ENCODE measurements at regions of chr16 and their contacts with region 1.

Region 1: GRCh38 chr16:53054670-53055485 is at the start of gene CHD9:
- DNase-seq: peak; percentile 72
- H3K4me3 Mint-ChIP-seq: peak within 1 kb of the TSS; percentile 80
- H3K27ac Mint-ChIP-seq: no peak within 1 kb of the TSS
- H3K4me1 Mint-ChIP-seq: peaks cover 18% of the 10 kb centered on the region
- H3K27me3 Mint-ChIP-seq: peaks cover 3% of the 10 kb centered on the region
- total RNA-seq, gene CHD9: 9.4 to 9.7 TPM

Region 2: DNA sequence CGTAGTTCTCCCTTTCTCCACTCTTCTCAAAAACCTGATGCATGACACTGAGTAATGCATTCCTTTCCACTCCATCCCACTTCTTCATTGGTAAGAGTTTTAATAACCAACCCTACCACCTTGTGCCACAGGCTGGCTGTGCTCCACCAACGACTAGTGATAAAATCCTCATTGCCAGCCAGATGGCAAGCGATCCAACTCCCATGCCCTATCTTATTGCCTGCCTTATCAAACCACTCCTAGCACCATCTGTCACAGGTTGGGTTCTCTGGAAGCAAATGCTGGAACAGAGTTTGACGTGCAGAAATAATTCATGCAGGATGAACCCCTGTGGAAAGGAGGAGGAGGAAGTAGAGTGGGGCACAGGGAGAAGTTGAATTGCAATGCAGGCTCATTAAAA is 101.7 kb before region 1 on chr16:
- CTCF ChIA-PET with region 1: no interaction called
- intact Hi-C with region 1: no loop called
- DNase-seq: no peak
- H3K4me3 Mint-ChIP-seq: no peak overlapping the region
- H3K27ac Mint-ChIP-seq: no peak overlapping the region
- H3K4me1 Mint-ChIP-seq: no peaks in the 10 kb centered on the region
- H3K27me3 Mint-ChIP-seq: peaks cover 6% of the 10 kb centered on the region

Region 3: DNA sequence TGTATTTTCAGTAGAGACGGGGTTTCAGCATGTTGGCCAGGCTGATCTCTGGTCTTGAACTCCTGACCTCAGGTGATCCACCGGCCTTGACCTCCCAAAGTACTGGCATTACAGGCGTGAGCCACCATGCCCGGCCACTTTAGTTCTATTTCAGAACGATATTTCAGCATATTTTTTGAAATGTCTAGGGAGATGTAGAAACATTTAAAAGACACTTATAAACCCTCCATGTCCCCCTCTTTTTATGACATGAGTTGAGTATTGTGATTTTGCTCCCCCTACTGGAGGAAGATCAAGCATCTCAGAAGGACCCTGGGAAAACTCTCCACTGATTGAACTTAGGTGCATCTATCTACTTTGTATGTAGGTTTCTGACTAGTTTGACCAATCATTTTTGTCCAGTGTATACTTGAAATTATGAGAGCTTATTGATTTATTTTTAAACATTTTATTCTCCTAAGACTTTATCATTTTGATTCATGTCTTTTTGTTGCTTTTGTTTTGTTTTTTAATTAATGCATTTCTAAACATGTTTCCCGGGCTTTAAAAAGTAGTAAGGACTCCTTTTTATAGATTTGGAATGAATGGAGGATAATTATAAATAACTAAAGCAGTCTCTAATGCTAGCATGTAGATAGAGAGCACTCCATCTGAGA is 105.0 kb after region 1 on chr16:
- CTCF ChIA-PET with region 1: interaction called, 30 read pairs
- intact Hi-C with region 1: loop called (anchors 1 kb)
- DNase-seq: no peak
- H3K4me3 Mint-ChIP-seq: no peak overlapping the region
- H3K27ac Mint-ChIP-seq: no peak overlapping the region
- H3K4me1 Mint-ChIP-seq: no peaks in the 10 kb centered on the region
- H3K27me3 Mint-ChIP-seq: no peaks in the 10 kb centered on the region

Region 4: DNA sequence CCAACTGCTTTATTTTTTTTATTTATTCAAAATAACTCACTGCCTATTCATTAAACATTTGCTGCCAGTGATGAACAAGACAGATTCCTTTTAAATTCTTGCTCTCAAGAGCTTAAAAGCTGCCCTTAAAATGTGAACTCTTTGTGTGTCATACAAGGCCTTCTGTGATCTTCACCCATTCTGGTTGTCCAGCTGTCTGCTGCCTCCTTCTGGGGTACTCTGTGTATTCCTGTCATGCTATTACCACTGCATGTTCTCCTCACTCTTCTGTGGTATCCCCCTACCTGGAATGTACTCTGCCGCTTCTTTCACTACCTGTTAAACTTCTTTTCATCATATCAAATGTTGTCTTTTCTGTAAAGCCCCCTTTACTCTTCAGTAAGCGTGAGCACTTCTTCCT is 165.7 kb after region 1 on chr16:
- CTCF ChIA-PET with region 1: interaction called, 7 read pairs
- intact Hi-C with region 1: loop called (anchors 2 kb)
- DNase-seq: peak; percentile 10
- H3K4me3 Mint-ChIP-seq: no peak overlapping the region
- H3K27ac Mint-ChIP-seq: no peak overlapping the region
- H3K4me1 Mint-ChIP-seq: no peaks in the 10 kb centered on the region
- H3K27me3 Mint-ChIP-seq: no peaks in the 10 kb centered on the region

Region 5: DNA sequence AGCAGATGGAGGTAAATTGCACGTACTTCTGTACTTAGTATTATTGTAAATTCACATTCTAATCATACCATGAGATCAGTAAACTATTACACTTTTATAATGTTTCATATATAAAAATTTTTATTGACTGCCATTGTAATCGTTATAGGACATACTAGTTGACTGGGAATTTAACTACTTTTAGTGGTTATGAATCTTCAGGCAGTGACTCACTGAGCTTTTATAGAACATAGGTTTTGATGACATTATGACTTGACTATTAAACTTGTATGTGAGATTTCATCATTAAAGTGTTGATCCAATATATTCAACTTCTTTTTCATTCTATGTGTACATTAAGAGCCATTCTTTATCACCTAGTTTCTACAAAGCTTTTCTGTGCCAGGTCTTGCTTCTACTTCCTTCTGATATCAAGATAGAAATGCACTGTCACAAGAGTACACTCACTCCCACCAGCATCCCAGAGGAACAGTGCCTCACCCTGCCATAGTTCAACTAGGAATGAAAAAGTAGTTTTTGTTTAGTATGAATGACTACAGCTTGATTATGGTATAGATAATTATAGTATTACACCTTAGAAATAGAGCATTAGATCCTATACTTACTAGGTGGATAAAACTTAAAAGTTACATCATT is 237.0 kb after region 1 on chr16:
- CTCF ChIA-PET with region 1: no interaction called
- intact Hi-C with region 1: no loop called
- DNase-seq: no peak
- H3K4me3 Mint-ChIP-seq: no peak overlapping the region
- H3K27ac Mint-ChIP-seq: no peak overlapping the region
- H3K4me1 Mint-ChIP-seq: no peaks in the 10 kb centered on the region
- H3K27me3 Mint-ChIP-seq: no peaks in the 10 kb centered on the region

Region 6: GRCh38 chr16:53372992-53373871 is 318.4 kb after region 1 on chr16:
- CTCF ChIA-PET with region 1: no interaction called
- intact Hi-C with region 1: loop called (anchors 5 kb)
- DNase-seq: peak; percentile 89
- H3K4me3 Mint-ChIP-seq: no peak overlapping the region
- H3K27ac Mint-ChIP-seq: peak overlapping the region; percentile 41
- H3K4me1 Mint-ChIP-seq: peaks cover 37% of the 10 kb centered on the region
- H3K27me3 Mint-ChIP-seq: no peaks in the 10 kb centered on the region

Region 7: GRCh38 chr16:53509906-53510703 is 455.2 kb after region 1 on chr16:
- CTCF ChIA-PET with region 1: no interaction called
- intact Hi-C with region 1: loop called (anchors 1 kb)
- DNase-seq: peak; percentile 55
- H3K4me3 Mint-ChIP-seq: peak overlapping the region; percentile 10
- H3K27ac Mint-ChIP-seq: no peak overlapping the region
- H3K4me1 Mint-ChIP-seq: peaks cover 18% of the 10 kb centered on the region
- H3K27me3 Mint-ChIP-seq: no peaks in the 10 kb centered on the region

Measured in activated naive CD4-positive, alpha-beta T cell treated with anti-CD3 and anti-CD28 coated beads for 36 hours (primary cell).